Activated naive CD4-positive, alpha-beta T cell treated with anti-CD3 and anti-CD28 coated beads for 36 hours (primary cell): ENCODE measurements at regions of chr14 and their contacts with region 1.

Region 1: DNA sequence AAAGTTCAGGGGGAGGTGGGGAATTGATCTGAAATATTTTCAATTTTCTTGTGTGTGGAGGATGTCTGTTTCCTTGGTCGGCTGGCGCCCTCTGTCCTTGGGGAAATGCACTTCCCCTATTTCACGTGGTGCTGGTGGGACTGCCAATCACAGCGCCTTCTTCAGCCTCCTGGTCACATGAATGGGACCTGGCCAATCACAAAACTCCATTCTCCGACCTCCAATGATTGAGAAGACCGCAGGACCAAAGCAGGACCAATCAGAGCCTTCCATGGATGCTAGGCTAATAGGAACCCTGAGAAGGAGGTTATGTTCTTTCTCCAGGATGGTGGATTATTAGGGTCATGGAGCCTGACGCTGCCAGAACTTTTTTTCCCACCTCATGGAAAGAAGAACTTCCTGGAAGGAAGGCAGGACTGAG is 188.6 kb downstream of the TTC8 start:
- DNase-seq: peak; percentile 52
- H3K4me3 Mint-ChIP-seq: no peak overlapping the region
- H3K27ac Mint-ChIP-seq: no peak overlapping the region
- H3K4me1 Mint-ChIP-seq: peaks cover under 1% of the 10 kb centered on the region
- H3K27me3 Mint-ChIP-seq: peaks cover 7% of the 10 kb centered on the region

Region 2: GRCh38 chr14:88556581-88556980 is 456.5 kb before region 1 on chr14:
- CTCF ChIA-PET with region 1: no interaction called
- intact Hi-C with region 1: loop called (anchors 2 kb)
- DNase-seq: no peak
- H3K4me3 Mint-ChIP-seq: no peak overlapping the region
- H3K27ac Mint-ChIP-seq: no peak overlapping the region
- H3K4me1 Mint-ChIP-seq: peaks cover 31% of the 10 kb centered on the region
- H3K27me3 Mint-ChIP-seq: peaks cover 37% of the 10 kb centered on the region